B cell (primary cell): ENCODE measurements at regions of chr3 and their contacts with region 1.

Region 1: DNA sequence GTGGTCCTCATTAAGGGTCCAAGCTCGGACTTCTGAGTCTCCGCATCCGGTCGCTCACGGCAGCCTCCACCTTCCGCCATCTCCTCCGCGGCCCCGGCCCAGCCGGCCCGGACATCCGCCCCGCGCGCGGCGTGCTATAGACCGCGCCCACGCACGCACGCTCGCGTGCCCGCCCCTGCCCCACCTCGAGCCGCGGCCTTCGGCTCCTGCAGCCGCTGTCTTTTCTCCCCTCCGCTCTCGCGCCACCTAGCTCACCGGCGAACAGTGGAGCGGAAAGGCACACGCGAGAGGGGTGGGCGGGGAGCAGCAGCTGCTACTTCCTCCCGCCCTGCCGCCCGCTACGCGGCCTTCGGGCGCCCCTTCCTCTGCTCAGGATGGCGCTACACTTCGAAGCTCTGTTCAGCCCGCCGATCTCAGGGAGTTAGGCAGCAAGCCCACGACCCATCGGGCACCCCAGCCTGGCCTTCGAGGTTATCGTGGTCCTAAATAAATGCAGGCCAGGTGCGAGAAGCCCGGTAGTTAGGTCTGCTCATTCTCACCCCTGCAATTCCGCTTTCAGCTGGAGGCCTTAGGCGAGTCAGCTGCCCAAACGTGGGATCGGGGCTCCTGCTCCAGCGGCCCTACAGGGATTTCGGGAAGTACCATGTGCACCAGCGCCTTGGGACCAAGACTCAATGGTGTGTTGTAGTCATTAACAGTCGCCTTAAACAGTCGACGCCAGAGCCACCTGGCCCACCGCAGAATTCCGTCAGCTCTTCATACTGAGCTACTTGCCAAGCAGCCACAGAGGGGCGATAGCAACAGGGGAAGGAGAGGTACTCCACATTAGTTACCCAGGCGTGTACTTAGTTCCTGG is at the start of gene USP4:
- DNase-seq: peak; percentile 96
- ATAC-seq: peak; percentile 86
- H3K4me3 ChIP-seq: peak within 1 kb of the TSS; percentile 82 to 96 (median 90)
- H3K4me3 Mint-ChIP-seq: peak within 1 kb of the TSS; percentile 83
- H3K27ac ChIP-seq: peak within 1 kb of the TSS; percentile 96 to 99
- H3K27ac Mint-ChIP-seq: peak within 1 kb of the TSS; percentile 97
- H3K4me1 ChIP-seq: peaks cover 60 to 70% of the 10 kb centered on the region in 2 donors
- H3K4me1 Mint-ChIP-seq: peaks cover 53% of the 10 kb centered on the region
- H3K27me3 ChIP-seq: no peaks in the 10 kb centered on the region
- H3K27me3 Mint-ChIP-seq: no peaks in the 10 kb centered on the region
- CTCF ChIP-seq: no peak
- total RNA-seq, gene USP4: 113 and 116 TPM in 2 replicates

Region 2: DNA sequence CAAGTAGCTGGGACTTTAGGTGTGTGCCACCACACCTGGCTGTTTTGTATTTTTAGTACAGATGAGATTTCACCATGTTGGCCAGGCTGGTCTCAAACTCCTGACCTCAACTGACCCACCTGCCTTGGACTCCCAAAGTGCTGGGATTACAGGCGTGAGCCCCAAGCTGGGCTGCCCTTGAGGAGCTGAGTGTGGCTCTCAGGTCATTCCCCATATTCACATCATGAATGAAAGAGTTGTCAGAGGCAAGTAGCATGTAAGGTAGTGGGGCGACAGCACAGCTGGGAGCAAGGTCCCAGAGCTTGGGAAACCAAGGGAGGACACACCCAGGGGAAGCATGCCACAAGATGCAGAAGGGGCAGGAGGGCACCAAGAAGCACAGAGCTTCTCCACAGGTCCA is 179.0 kb before region 1 on chr3:
- CTCF ChIA-PET with region 1: no interaction called
- POLR2A ChIA-PET with region 1: no interaction called
- intact Hi-C with region 1: no loop called
- DNase-seq: no peak
- ATAC-seq: no peak
- H3K4me3 ChIP-seq: no peak overlapping the region
- H3K4me3 Mint-ChIP-seq: no peak overlapping the region
- H3K27ac ChIP-seq: no peak overlapping the region
- H3K27ac Mint-ChIP-seq: no peak overlapping the region
- H3K4me1 ChIP-seq: peaks cover 12 to 15% of the 10 kb centered on the region in 2 donors
- H3K4me1 Mint-ChIP-seq: peaks cover 17% of the 10 kb centered on the region
- H3K27me3 ChIP-seq: no peaks in the 10 kb centered on the region
- H3K27me3 Mint-ChIP-seq: no peaks in the 10 kb centered on the region
- CTCF ChIP-seq: no peak

Region 3: DNA sequence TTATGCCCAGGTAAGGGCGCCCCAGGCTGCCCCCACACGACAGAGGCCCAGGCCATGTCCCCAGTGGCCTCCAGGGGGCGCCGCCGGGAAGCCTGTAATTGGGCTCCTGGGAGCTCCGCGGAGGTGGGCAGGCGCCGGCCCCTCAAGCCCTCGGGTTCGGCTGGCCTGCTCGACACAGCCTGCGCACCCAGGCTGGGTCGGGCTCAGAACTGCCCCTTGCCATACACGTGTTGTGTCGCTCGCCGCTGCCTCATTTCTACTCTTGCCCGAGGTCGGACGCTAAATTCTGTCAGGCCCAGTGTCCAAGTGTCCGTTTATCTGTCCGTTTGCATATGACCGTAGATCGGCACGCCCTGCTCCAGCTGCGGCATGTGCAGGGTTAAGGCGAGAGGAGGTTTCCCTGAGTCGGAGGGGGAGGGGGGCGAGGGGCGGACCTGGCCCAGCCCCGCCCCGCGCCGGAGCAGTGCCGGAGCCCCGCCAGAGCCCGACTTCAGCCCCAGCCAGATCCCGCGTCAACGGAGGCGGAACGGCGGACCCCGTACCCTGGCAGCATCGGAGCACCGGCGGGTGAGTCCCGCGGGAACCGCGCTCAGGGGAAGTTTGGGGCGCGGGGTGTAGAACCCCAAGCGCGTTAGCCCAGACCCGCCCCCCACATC is 168.9 kb before region 1 on chr3 and contains the start of gene KLHDC8B:
- CTCF ChIA-PET with region 1: interaction called, 8 read pairs
- POLR2A ChIA-PET with region 1: no interaction called
- intact Hi-C with region 1: loop called (anchors 5 kb)
- DNase-seq: peak; percentile 81
- ATAC-seq: peak; percentile 79
- H3K4me3 ChIP-seq: peak within 1 kb of the TSS; percentile 59 to 76 (median 71)
- H3K4me3 Mint-ChIP-seq: peak within 1 kb of the TSS; percentile 90
- H3K27ac ChIP-seq: peak within 1 kb of the TSS in 1 of 2 donors; percentile 29
- H3K27ac Mint-ChIP-seq: peak within 1 kb of the TSS; percentile 70
- H3K4me1 ChIP-seq: peaks cover 19 to 25% of the 10 kb centered on the region in 2 donors
- H3K4me1 Mint-ChIP-seq: peaks cover 15% of the 10 kb centered on the region
- H3K27me3 ChIP-seq: peaks cover 0 to 7% (median 1%) of the 10 kb centered on the region in 4 experiments
- H3K27me3 Mint-ChIP-seq: peaks cover 7% of the 10 kb centered on the region
- CTCF ChIP-seq: peak; percentile 95
- total RNA-seq, gene KLHDC8B: 1.9 and 3.6 TPM in 2 replicates

Region 4: DNA sequence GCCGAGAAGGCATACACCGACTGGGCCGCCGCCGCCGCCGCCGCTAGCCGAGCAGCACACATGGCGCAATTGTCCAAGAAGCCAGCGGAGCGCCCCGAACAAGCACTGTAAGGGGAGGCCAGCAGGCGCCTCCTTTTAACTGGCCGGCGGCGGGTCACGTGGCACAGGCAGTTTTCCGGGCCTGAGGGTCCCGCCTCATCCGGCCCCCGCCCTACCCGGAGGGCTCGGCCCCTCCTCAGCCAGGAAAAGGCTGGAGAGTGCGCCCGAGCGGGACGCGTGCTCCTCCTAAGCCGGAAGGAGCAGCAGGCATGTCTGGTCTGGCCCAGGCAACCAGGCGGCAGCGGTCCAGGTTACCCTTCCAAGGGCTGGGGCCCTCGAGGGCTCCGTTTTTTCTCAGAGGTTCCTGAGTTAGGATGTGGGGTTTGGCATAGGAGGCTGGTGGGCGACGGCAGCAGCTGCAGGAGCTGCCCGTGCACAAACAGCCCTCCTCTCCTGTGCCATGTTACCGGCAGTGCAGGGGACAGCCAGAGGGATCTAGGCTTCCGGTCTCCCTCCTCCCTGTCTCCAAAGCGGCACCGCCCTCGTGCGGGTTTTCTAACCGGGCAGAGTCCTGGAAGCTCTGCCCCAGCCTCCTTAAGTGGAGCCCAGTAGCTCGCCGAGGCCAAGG is 18.2 kb after region 1 on chr3 and contains the start of gene GPX1:
- CTCF ChIA-PET with region 1: interaction called, 65 read pairs
- POLR2A ChIA-PET with region 1: interaction called, 47 read pairs
- intact Hi-C with region 1: loop called (anchors 1 kb)
- DNase-seq: peak; percentile 83
- ATAC-seq: peak; percentile 80
- H3K4me3 ChIP-seq: peak within 1 kb of the TSS; percentile 59 to 83 (median 77)
- H3K4me3 Mint-ChIP-seq: peak within 1 kb of the TSS; percentile 93
- H3K27ac ChIP-seq: peak within 1 kb of the TSS; percentile 59 to 85
- H3K27ac Mint-ChIP-seq: peak within 1 kb of the TSS; percentile 97
- H3K4me1 ChIP-seq: peaks cover 14 to 38% of the 10 kb centered on the region in 2 donors
- H3K4me1 Mint-ChIP-seq: peaks cover 28% of the 10 kb centered on the region
- H3K27me3 ChIP-seq: no peaks in the 10 kb centered on the region
- H3K27me3 Mint-ChIP-seq: no peaks in the 10 kb centered on the region
- CTCF ChIP-seq: no peak
- total RNA-seq, gene GPX1: 64.7 and 79.5 TPM in 2 replicates

Region 5: DNA sequence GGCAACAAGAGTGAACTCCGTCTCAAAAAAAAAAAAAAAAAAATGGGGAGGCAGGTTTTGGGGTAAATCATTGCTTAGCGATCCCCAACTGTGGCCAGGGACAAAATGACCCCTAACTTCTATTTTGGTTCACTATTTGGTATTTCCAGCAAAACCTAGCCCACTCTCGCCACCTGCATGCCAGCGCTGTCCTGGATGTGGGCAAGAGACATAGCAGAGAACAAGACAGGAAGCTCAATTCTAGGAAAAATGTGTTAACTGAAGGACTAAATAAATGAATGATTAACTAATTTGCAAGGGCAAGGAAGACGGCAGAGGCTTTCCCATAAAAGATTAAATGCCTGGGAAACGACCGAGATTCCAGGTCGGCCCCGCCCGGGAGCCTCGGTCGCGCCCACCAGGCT is 88.5 kb after region 1 on chr3:
- CTCF ChIA-PET with region 1: interaction called, 14 read pairs
- POLR2A ChIA-PET with region 1: interaction called, 35 read pairs
- intact Hi-C with region 1: loop called (anchors 1 kb)
- DNase-seq: no peak
- ATAC-seq: no peak
- H3K4me3 ChIP-seq: peak overlapping the region; percentile 47 to 77 (median 72)
- H3K4me3 Mint-ChIP-seq: peak overlapping the region; percentile 91
- H3K27ac ChIP-seq: peak overlapping the region; percentile 77 to 89
- H3K27ac Mint-ChIP-seq: peak overlapping the region; percentile 94
- H3K4me1 ChIP-seq: peaks cover 7 to 11% of the 10 kb centered on the region in 2 donors
- H3K4me1 Mint-ChIP-seq: peaks cover 11% of the 10 kb centered on the region
- H3K27me3 ChIP-seq: no peaks in the 10 kb centered on the region
- H3K27me3 Mint-ChIP-seq: no peaks in the 10 kb centered on the region
- CTCF ChIP-seq: no peak

Region 6: DNA sequence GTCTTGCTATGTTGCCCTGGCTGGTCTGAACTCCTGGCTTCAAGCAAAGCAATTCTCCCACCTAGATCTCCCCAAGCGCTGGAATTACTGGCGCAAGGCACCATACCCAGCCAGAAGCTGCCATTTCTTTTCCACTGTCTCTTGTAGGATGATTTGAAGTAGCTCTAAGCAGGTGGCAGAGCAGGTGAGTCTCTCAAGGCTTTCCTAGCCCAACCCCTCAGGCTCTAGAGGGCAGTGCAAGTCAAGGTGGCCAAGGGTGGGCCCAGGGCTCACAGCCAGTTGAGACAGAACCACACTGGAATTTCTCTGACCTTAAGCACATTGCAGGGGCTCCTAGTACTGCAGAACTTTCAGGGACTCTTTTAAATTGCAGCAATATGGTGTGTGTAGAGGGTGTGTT is 114.3 kb after region 1 on chr3:
- CTCF ChIA-PET with region 1: interaction called, 137 read pairs
- POLR2A ChIA-PET with region 1: interaction called, 12 read pairs
- intact Hi-C with region 1: loop called (anchors 1 kb)
- DNase-seq: no peak
- ATAC-seq: no peak
- H3K4me3 ChIP-seq: no peak overlapping the region
- H3K4me3 Mint-ChIP-seq: no peak overlapping the region
- H3K27ac ChIP-seq: no peak overlapping the region
- H3K27ac Mint-ChIP-seq: peak overlapping the region; percentile 22
- H3K4me1 ChIP-seq: no peaks in the 10 kb centered on the region
- H3K4me1 Mint-ChIP-seq: no peaks in the 10 kb centered on the region
- H3K27me3 ChIP-seq: no peaks in the 10 kb centered on the region
- H3K27me3 Mint-ChIP-seq: no peaks in the 10 kb centered on the region
- CTCF ChIP-seq: no peak

Region 7: DNA sequence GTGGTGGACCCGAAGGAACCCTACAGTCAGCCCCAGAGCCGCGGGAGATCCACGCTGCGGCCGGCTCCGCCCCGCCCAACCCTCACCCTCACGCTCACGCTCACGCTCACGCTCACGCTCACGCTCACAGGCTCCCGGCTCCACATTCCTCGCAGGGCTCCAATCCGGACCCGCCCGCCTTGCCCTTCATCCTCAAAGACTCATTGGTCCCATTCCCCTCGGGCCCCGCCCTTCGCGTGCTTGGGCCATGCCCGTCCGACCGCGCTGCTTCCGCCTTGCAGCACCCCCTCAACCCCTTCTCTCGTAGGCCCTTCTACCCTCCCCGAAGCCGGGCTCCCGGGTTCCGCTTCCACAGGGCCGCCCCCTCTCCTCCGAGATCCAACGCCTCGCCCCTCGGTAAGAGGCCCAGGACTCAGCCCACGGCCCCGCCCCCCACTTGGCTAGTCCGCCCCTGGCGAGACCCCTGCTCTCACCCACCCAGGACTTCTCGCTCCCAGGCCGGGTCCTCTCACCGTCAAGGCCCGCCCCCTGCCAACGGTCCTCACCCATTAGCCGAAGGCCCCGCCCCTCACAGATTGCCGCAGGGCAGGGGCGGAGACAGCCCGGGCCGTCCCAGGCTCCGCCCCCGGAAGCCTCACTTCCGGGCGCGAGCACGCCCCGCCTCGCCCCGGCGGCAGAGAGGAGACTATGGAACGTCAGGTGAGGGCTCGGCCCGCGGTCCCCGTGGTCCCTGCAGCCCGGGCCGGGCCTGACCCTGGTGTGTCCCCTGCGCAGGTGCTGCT is 333.7 kb after region 1 on chr3 and contains the start of gene APEH:
- CTCF ChIA-PET with region 1: interaction called, 3 read pairs
- POLR2A ChIA-PET with region 1: no interaction called
- intact Hi-C with region 1: loop called (anchors 1 kb)
- DNase-seq: peak; percentile 98
- ATAC-seq: peak; percentile 88
- H3K4me3 ChIP-seq: peak within 1 kb of the TSS; percentile 51 to 84 (median 73)
- H3K4me3 Mint-ChIP-seq: peak within 1 kb of the TSS; percentile 99
- H3K27ac ChIP-seq: peak within 1 kb of the TSS; percentile 86 to 94
- H3K27ac Mint-ChIP-seq: peak within 1 kb of the TSS; percentile 98
- H3K4me1 ChIP-seq: peaks cover 13 to 18% of the 10 kb centered on the region in 2 donors
- H3K4me1 Mint-ChIP-seq: peaks cover 30% of the 10 kb centered on the region
- H3K27me3 ChIP-seq: no peaks in the 10 kb centered on the region
- H3K27me3 Mint-ChIP-seq: no peaks in the 10 kb centered on the region
- CTCF ChIP-seq: no peak
- total RNA-seq, gene APEH: 87.5 and 96.2 TPM in 2 replicates

Region 8: GRCh38 chr3:50235716-50236496 is 895.7 kb after region 1 on chr3 and contains the start of gene GNAI2:
- CTCF ChIA-PET with region 1: no interaction called
- POLR2A ChIA-PET with region 1: no interaction called
- intact Hi-C with region 1: loop called (anchors 10 kb)
- DNase-seq: peak; percentile 99
- ATAC-seq: peak; percentile 88
- H3K4me3 ChIP-seq: peak within 1 kb of the TSS; percentile 70 to 100 (median 95)
- H3K4me3 Mint-ChIP-seq: peak within 1 kb of the TSS; percentile 97
- H3K27ac ChIP-seq: peak within 1 kb of the TSS; percentile 65 to 91
- H3K27ac Mint-ChIP-seq: peak within 1 kb of the TSS; percentile 97
- H3K4me1 ChIP-seq: peaks cover 39 to 46% of the 10 kb centered on the region in 2 donors
- H3K4me1 Mint-ChIP-seq: peaks cover 54% of the 10 kb centered on the region
- H3K27me3 ChIP-seq: no peaks in the 10 kb centered on the region
- H3K27me3 Mint-ChIP-seq: no peaks in the 10 kb centered on the region
- CTCF ChIP-seq: no peak
- total RNA-seq, gene GNAI2: 295 and 302 TPM in 2 replicates